ENCODE measurements at regions of chr9 and their contacts with region 1.

Region 1: GRCh38 chr9:126781186-126782052 is 23.4 kb upstream of the ZBTB43 start:
- DNase-seq: peak; percentile 92
- H3K4me3 ChIP-seq: peak overlapping the region in 1 of 8 donors; percentile 31
- H3K27ac ChIP-seq: no peak overlapping the region
- H3K4me1 ChIP-seq: peaks cover 0 to 8% (median 5%) of the 10 kb centered on the region in 6 donors
- H3K27me3 ChIP-seq: peaks cover 0 to 81% (median 6%) of the 10 kb centered on the region in 7 donors
- CTCF ChIP-seq: peak; percentile 80 to 99 (median 98)
- POLR2A ChIP-seq: no peak

Region 2: GRCh38 chr9:126604059-126605055 is 177.1 kb before region 1 on chr9:
- intact Hi-C with region 1: loop called (anchors 10 kb)
- DNase-seq: no peak
- H3K4me3 ChIP-seq: no peak overlapping the region
- H3K27ac ChIP-seq: no peak overlapping the region
- H3K4me1 ChIP-seq: peaks cover 0 to 7% (median 0%) of the 10 kb centered on the region in 6 donors
- H3K27me3 ChIP-seq: peaks cover 0 to 64% (median 12%) of the 10 kb centered on the region in 7 donors
- CTCF ChIP-seq: no peak
- POLR2A ChIP-seq: no peak

Region 3: GRCh38 chr9:126704873-126705766 is 76.3 kb before region 1 on chr9:
- intact Hi-C with region 1: loop called (anchors 2 kb)
- DNase-seq: peak; percentile 94
- H3K4me3 ChIP-seq: peak overlapping the region in 1 of 8 donors; percentile 55
- H3K27ac ChIP-seq: no peak overlapping the region
- H3K4me1 ChIP-seq: peaks cover 12 to 33% (median 23%) of the 10 kb centered on the region in 6 donors
- H3K27me3 ChIP-seq: peaks cover 0 to 63% (median 32%) of the 10 kb centered on the region in 7 donors
- CTCF ChIP-seq: peak; percentile 80 to 97 (median 91)
- POLR2A ChIP-seq: no peak

Region 4: GRCh38 chr9:127074561-127075548 is 293.4 kb after region 1 on chr9:
- intact Hi-C with region 1: no loop called
- DNase-seq: no peak
- H3K4me3 ChIP-seq: no peak overlapping the region
- H3K27ac ChIP-seq: peak overlapping the region in 1 of 8 donors; percentile 7
- H3K4me1 ChIP-seq: peaks cover 0 to 24% (median 2%) of the 10 kb centered on the region in 6 donors
- H3K27me3 ChIP-seq: no peaks in the 10 kb centered on the region
- CTCF ChIP-seq: no peak
- POLR2A ChIP-seq: no peak